ENCODE measurements at regions of chr6 and their contacts with region 1.

Region 1: GRCh38 chr6:95866732-95867131 is 149.0 kb upstream of the FUT9 start:
- DNase-seq: no peak
- ATAC-seq: no peak
- H3K4me3 Mint-ChIP-seq: no peak overlapping the region
- H3K27ac Mint-ChIP-seq: no peak overlapping the region
- H3K4me1 Mint-ChIP-seq: no peaks in the 10 kb centered on the region
- H3K27me3 Mint-ChIP-seq: no peaks in the 10 kb centered on the region
- CTCF ChIP-seq: no peak

Region 2: GRCh38 chr6:95431637-95432228 is 435.0 kb before region 1 on chr6:
- CTCF ChIA-PET with region 1: no interaction called
- POLR2A ChIA-PET with region 1: no interaction called
- intact Hi-C with region 1: loop called (anchors 1 kb)
- DNase-seq: no peak
- ATAC-seq: no peak
- H3K4me3 Mint-ChIP-seq: no peak overlapping the region
- H3K27ac Mint-ChIP-seq: no peak overlapping the region
- H3K4me1 Mint-ChIP-seq: no peaks in the 10 kb centered on the region
- H3K27me3 Mint-ChIP-seq: no peaks in the 10 kb centered on the region
- CTCF ChIP-seq: no peak

Region 3: DNA sequence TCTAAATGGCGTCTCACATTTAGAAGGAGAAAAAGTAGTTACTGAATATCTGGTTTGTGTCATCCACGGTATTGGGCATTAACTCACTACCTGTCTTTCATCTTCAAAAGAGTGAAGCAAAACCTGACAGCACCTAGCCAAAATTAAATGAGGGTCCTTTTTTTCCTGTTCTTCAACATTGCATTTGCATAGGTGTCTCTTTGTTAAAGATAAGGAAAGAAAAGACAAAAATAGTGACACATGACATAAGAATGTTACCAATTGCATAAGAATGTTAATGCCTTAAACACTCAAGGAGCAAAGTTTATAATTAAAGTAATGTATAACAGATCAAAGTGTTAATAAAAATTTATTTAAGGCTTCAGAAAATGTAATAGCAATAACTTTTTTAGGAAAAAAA is 350.8 kb before region 1 on chr6:
- CTCF ChIA-PET with region 1: no interaction called
- POLR2A ChIA-PET with region 1: no interaction called
- intact Hi-C with region 1: no loop called
- DNase-seq: no peak
- ATAC-seq: no peak
- H3K4me3 Mint-ChIP-seq: no peak overlapping the region
- H3K27ac Mint-ChIP-seq: no peak overlapping the region
- H3K4me1 Mint-ChIP-seq: no peaks in the 10 kb centered on the region
- H3K27me3 Mint-ChIP-seq: no peaks in the 10 kb centered on the region
- CTCF ChIP-seq: no peak